Calu3 (cell line): ENCODE measurements at regions of chr16 and their contacts with region 1.

Region 1: GRCh38 chr16:87705771-87706275 is 60.0 kb downstream of the KLHDC4 start:
- DNase-seq: no peak
- H3K4me3 Mint-ChIP-seq: no peak overlapping the region
- H3K27ac Mint-ChIP-seq: no peak overlapping the region
- H3K4me1 Mint-ChIP-seq: no peaks in the 10 kb centered on the region
- H3K27me3 Mint-ChIP-seq: no peaks in the 10 kb centered on the region
- CTCF ChIP-seq: no peak

Region 2: GRCh38 chr16:87499189-87499486 is 206.7 kb before region 1 on chr16:
- CTCF ChIA-PET with region 1: interaction called, 12 read pairs
- intact Hi-C with region 1: no loop called
- DNase-seq: no peak
- H3K4me3 Mint-ChIP-seq: no peak overlapping the region
- H3K27ac Mint-ChIP-seq: no peak overlapping the region
- H3K4me1 Mint-ChIP-seq: peaks cover under 1% of the 10 kb centered on the region
- H3K27me3 Mint-ChIP-seq: no peaks in the 10 kb centered on the region
- CTCF ChIP-seq: no peak

Region 3: GRCh38 chr16:87721622-87722585 is 16.1 kb after region 1 on chr16:
- CTCF ChIA-PET with region 1: interaction called, 16 read pairs
- intact Hi-C with region 1: no loop called
- DNase-seq: no peak
- H3K4me3 Mint-ChIP-seq: no peak overlapping the region
- H3K27ac Mint-ChIP-seq: no peak overlapping the region
- H3K4me1 Mint-ChIP-seq: no peaks in the 10 kb centered on the region
- H3K27me3 Mint-ChIP-seq: no peaks in the 10 kb centered on the region
- CTCF ChIP-seq: no peak

Region 4: GRCh38 chr16:87740909-87741424 is 35.1 kb after region 1 on chr16:
- CTCF ChIA-PET with region 1: no interaction called
- intact Hi-C with region 1: no loop called
- DNase-seq: no peak
- H3K4me3 Mint-ChIP-seq: no peak overlapping the region
- H3K27ac Mint-ChIP-seq: no peak overlapping the region
- H3K4me1 Mint-ChIP-seq: no peaks in the 10 kb centered on the region
- H3K27me3 Mint-ChIP-seq: no peaks in the 10 kb centered on the region
- CTCF ChIP-seq: no peak